Heart right ventricle (tissue), 16 donors: ENCODE measurements at regions of chr1 and their contacts with region 1.

Region 1: DNA sequence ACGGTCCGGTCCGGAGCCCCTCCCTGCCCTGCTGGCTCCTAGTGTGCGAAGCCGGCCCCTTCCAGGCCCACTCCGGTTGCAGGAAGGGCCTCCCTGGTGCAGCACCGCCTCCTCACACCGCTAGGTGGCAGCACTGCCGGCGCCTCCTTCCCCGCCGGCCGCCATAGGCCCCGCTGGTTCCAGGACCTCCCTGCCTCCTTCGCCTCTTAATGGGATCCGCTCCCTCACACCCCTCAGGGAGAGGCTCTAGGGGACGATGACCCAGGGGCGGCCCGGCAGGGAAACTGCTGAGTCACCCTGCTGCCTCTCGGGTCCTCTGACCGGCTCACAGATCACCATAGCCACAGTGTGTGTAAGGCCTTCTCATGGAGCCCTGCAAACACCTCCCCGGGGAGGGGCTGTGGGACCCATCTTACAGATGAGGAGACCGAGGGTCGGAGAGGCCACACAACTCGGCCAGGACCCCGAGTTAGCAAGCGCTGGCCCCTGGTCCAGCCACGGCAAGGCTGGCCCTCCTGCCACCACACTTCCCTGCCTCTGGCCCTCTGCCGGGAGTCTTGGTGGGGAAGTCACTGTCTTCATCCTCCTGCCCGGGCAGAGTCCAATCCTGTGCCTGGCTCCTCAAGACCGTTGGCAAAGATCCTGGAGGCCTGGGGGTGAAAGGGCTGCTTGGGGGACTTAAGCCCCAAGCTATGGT is 1.6 kb upstream of the AJAP1 start:
- DNase-seq: peak; percentile 27 to 57
- ATAC-seq: peak; percentile 51 to 89 (median 78)
- H3K4me3 ChIP-seq: peak overlapping the region in 2 of 10 donors; percentile 1 to 20
- H3K27ac ChIP-seq: no peak overlapping the region
- H3K4me1 ChIP-seq: peaks cover 3 to 24% (median 8%) of the 10 kb centered on the region in 9 donors
- H3K27me3 ChIP-seq: peaks cover 19 to 91% (median 77%) of the 10 kb centered on the region in 7 donors
- CTCF ChIP-seq: peak; percentile 88 to 99 (median 96)

Region 2: DNA sequence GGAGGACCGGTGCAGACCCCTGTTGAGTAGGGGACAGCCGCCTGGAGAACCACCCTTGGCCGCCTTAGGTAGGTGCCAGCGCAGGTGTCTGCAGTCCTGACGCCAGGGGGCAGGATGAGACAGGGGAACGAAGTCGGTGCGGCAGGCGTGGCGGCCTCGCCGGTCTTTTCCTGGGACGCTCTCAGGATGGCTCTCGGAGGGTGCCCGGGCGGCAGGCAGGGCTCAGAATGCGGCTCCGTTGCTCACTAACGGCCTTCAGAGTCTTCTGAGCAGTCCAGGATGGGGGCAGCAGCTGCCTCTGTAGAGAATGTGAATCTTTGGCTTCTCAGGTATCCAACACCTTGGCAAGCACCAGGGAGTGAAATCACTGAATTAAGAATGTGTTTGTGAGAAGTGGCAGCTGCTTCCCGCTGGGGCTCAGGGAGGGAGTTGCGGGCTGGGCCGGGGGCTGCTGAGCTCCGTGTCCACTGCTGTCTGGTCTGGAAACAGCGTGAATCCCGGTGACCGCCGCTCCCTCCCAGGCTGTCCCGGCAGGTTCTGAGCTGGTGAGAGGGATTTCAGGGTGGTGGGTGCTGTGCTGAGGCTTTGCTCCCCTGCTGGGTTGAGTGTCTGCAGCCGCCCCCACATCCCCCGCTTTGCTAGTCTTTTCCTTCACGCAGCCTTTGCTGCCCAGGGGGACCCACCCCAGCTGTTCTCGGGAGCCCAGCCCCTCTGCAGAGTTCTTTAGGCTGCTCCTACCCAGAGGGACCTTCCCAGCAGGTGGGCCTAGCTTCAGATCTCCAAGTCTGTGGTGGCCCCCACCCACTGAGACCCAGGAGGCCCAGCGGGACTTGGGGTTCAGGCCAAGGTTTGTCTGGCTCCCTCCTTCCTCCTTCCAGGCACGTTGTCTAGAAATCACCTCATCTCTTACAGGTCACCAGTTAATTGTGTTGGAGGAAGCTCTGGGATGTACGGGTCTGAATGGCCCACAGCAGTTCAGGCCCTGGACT is 741.6 kb before region 1 on chr1:
- intact Hi-C with region 1: loop called in 2 of 10 experiments (anchors 5 to 10 kb)
- DNase-seq: peak; percentile 52 to 70
- ATAC-seq: peak in 7 of 8 donors; percentile 41 to 79 (median 72)
- H3K4me3 ChIP-seq: no peak overlapping the region
- H3K27ac ChIP-seq: no peak overlapping the region
- H3K4me1 ChIP-seq: peaks cover 0 to 5% (median 0%) of the 10 kb centered on the region in 9 donors
- H3K27me3 ChIP-seq: peaks cover 0 to 44% (median 30%) of the 10 kb centered on the region in 7 donors
- CTCF ChIP-seq: peak; percentile 34 to 75 (median 70)

Region 3: DNA sequence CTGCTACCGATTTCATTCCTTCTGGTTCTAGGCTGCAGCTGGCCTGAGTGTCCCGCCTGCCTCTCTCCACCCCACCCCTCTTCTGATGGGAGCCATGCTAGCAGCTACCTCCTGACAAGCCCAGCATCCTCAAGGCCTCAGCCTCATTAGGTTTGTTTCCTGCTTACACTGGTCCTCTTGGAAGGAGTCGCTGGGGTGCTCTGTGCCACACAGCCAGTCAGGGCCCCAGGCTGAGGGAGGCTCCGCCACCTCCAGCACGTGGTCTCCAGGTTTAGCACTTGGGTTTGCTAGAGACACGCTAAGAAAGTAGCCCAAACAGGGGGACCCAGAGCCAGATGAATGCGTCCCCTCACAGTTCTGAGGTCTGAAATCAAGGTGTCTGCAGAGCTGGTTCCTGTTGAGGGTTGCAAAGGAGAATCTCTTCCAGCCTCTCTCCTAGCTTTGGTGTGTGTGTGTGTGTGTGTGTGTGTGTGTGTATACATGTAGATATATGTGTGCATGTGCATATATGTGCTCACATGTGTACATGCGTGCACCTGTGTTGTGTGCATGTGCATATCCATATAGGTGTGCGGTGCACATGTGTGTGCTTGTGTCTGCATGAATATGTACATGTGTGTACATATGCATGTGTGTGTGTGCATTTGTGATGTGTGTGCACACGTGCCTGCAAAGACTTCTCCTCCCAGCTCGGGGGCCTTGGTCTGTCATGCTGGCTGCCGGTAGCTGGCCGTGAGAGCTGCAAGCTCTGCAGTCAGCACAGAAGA is 299.5 kb before region 1 on chr1:
- intact Hi-C with region 1: no loop called
- DNase-seq: no peak
- ATAC-seq: no peak
- H3K4me3 ChIP-seq: no peak overlapping the region
- H3K27ac ChIP-seq: no peak overlapping the region
- H3K4me1 ChIP-seq: no peaks in the 10 kb centered on the region
- H3K27me3 ChIP-seq: peaks cover 0 to 22% (median 6%) of the 10 kb centered on the region in 7 donors
- CTCF ChIP-seq: no peak

Region 4: GRCh38 chr1:5745776-5746610 is 1093.2 kb after region 1 on chr1:
- intact Hi-C with region 1: loop called in 8 of 10 experiments (anchors 10 kb)
- DNase-seq: peak; percentile 44 to 66
- ATAC-seq: peak; percentile 56 to 91 (median 79)
- H3K4me3 ChIP-seq: no peak overlapping the region
- H3K27ac ChIP-seq: no peak overlapping the region
- H3K4me1 ChIP-seq: peaks cover 0 to 5% (median 0%) of the 10 kb centered on the region in 9 donors
- H3K27me3 ChIP-seq: peaks cover 0 to 83% (median 32%) of the 10 kb centered on the region in 7 donors
- CTCF ChIP-seq: peak; percentile 82 to 96 (median 90)

Region 5: DNA sequence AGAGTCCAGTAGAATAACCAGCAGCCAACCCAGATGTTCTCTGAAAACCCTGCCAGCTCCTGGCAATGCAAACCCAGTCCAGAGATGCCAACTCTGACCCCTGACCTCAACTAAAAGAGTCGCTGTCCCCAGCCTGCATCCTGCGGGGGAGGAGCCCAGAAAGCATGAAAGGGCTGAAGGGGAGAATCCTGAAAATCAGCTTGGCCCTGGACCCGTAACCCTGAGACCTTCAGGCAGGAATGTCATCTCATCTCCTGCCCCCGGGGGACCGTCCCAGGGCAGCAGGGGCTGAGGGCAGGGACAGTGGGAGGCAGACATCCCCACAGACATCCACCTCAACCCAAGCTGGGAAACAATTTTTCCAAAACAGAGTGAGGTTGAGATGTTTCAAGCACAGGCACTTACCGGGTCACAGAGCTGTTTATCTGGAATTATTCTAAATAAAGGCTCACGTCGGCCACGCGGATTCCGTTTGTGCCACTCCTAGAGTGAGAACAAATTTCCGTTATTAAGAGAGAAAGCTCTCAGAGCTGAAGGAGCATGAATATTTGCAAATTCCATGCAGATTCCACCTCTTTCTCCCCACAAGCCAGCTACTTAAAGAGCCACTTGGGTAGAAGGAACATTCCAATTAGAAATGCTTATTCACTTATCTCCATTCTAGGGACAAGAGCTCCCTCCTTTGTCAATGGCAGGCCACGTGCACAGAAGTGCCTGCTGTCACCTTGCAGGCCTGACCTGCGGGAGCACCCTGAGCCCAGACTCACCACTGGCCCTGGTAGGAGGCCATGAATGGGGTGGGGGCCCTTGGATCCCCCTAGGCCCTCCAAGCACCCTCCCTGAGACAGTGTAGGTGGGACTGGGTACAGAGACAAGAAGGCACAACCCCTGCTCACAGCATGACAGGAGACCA is 1099.3 kb after region 1 on chr1:
- intact Hi-C with region 1: loop called in 8 of 10 experiments (anchors 10 kb)
- DNase-seq: no peak
- ATAC-seq: peak in 3 of 8 donors; percentile 32 to 50 (median 35)
- H3K4me3 ChIP-seq: no peak overlapping the region
- H3K27ac ChIP-seq: no peak overlapping the region
- H3K4me1 ChIP-seq: peaks cover 0 to 11% (median 2%) of the 10 kb centered on the region in 9 donors
- H3K27me3 ChIP-seq: peaks cover 0 to 66% (median 13%) of the 10 kb centered on the region in 7 donors
- CTCF ChIP-seq: peak in 1 of 9 donors; percentile 6

Region 6: DNA sequence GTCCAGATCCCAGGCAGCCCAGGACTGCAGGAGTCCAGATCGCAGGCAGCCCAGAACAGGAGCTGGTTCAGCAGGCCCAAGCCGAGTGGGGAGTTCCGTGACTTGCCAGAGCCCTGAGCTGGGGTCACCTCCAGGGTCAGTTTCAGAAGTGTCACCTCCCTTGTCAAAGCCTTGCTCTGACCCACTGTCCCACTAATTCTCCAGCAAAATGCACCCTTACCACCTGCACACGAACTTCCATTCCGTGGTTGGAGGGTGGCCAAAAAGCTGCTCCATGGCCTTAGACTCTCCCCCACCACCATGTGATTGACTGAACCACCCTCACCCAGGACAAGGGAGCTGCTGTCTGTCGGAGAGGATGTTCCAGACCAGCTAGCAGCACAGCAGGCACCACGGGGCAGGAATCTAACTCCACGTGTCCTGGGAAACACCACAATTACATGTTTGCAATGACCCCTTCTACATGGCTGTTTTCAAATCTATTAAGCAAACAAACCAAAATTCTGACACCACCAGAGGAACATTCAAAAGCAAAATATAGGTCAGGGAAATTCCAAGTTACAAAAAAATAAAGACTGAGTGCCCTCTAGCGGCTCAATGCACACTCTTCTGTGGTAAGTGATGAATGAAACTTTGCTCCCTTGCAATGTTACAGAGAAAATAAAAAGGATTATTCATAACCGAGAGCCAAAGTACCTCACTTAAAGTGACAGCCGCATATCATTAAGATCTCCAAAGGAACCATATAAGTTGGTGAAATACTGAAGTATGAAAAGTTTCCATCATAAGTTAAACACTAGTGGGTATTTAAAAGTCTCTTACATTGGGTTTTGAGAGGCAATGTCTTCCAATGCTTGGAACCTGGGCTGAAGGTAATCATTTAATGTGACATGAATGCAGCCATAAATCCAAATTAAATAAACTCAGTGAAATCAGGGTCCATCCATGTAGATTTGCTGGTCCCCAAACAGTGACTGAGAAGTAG is 1263.1 kb after region 1 on chr1:
- intact Hi-C with region 1: loop called in 1 of 10 experiments (anchors 10 kb)
- DNase-seq: no peak
- ATAC-seq: peak in 5 of 8 donors; percentile 27 to 61 (median 53)
- H3K4me3 ChIP-seq: no peak overlapping the region
- H3K27ac ChIP-seq: no peak overlapping the region
- H3K4me1 ChIP-seq: peaks cover 0 to 6% (median 0%) of the 10 kb centered on the region in 9 donors
- H3K27me3 ChIP-seq: no peaks in the 10 kb centered on the region
- CTCF ChIP-seq: peak; percentile 27 to 74 (median 64)